ENCODE measurements at regions of chr19 and their contacts with region 1.

Region 1: GRCh38 chr19:41144403-41144802 is 30.2 kb downstream of the CYP2F1 start:
- DNase-seq: peak; percentile 77 to 90 (median 82)
- H3K4me3 ChIP-seq: no peak overlapping the region
- H3K4me3 Mint-ChIP-seq: no peak overlapping the region
- H3K27ac ChIP-seq: no peak overlapping the region
- H3K27ac Mint-ChIP-seq: peak overlapping the region in 2 of 8 donors; percentile 43 to 66
- H3K4me1 ChIP-seq: no peaks in the 10 kb centered on the region
- H3K4me1 Mint-ChIP-seq: peaks cover 0 to 3% (median 0%) of the 10 kb centered on the region in 3 donors
- H3K27me3 ChIP-seq: no peaks in the 10 kb centered on the region
- H3K27me3 Mint-ChIP-seq: peaks cover 24 to 33% of the 10 kb centered on the region in 2 donors

Region 2: DNA sequence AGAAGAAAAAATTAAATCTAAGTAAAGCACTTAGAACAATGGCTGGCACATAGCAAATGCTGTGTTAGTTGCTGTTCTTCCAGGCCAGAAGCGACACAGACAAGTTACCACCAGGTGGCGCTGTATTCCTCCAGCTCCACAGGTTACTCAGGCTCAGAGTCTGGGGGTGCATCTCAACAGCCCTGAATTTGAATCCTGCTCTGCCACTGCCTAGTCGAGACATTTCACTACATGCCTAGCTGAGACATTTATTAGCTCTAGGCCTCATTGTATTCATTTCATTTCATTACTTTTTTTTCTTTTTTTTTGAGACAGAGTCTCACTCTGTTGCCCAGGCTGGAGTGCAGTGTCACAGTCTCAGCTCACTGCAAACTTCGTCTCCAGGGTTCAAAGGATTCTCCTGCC is 169.8 kb before region 1 on chr19:
- CTCF ChIA-PET with region 1: interaction called, 10 read pairs
- POLR2A ChIA-PET with region 1: no interaction called
- DNase-seq: peak; percentile 66 to 81 (median 70)
- H3K4me3 ChIP-seq: no peak overlapping the region
- H3K4me3 Mint-ChIP-seq: no peak overlapping the region
- H3K27ac ChIP-seq: no peak overlapping the region
- H3K27ac Mint-ChIP-seq: no peak overlapping the region
- H3K4me1 ChIP-seq: peaks cover 20% of the 10 kb centered on the region
- H3K4me1 Mint-ChIP-seq: peaks cover 21 to 32% (median 26%) of the 10 kb centered on the region in 3 donors
- H3K27me3 ChIP-seq: no peaks in the 10 kb centered on the region
- H3K27me3 Mint-ChIP-seq: peaks cover 7 to 8% of the 10 kb centered on the region in 2 donors

Region 3: DNA sequence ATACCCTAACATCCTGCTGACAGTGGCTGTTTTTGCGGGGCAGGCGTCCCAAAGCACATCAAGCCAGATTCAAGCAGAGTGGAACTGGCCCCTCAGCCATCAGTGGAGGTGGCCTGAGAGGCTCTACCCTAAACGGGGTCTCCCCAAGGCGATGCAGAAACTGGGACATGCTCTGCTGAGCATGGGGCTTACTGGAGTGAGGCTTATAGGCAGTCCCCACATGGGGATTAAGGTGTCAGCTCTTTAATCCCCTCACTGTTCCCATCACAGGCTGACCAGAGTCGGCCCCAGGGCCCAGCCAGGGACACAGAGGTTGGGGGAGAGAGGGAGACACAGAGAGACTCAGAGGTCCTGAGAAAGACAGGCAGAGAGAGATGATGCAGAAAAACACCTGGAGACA is 13.2 kb before region 1 on chr19:
- CTCF ChIA-PET with region 1: interaction called, 11 read pairs
- POLR2A ChIA-PET with region 1: no interaction called
- DNase-seq: no peak
- H3K4me3 ChIP-seq: no peak overlapping the region
- H3K4me3 Mint-ChIP-seq: no peak overlapping the region
- H3K27ac ChIP-seq: no peak overlapping the region
- H3K27ac Mint-ChIP-seq: peak overlapping the region in 4 of 8 donors; percentile 67 to 94 (median 80)
- H3K4me1 ChIP-seq: peaks cover 12% of the 10 kb centered on the region
- H3K4me1 Mint-ChIP-seq: peaks cover 28 to 37% (median 36%) of the 10 kb centered on the region in 3 donors
- H3K27me3 ChIP-seq: no peaks in the 10 kb centered on the region
- H3K27me3 Mint-ChIP-seq: no peaks in the 10 kb centered on the region

Region 4: DNA sequence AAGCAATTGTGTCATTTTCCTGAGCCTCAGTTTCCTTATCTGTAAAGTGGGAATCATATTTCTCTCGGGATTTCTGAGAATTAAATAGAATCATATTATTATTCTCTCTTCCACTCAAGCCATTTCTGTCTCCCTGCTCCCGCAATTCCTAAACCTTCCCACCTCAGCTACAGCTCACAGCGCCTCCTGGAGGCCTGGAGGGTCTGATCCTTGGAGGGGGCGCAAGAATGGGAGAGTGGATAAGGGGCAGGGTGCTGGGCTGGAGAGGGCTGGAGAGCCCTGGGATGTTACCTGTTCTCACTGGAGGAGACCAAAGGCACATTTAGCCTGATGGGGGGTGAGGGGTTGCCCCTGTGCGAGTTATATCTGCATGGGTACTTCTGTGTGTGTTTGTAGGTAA is 17.5 kb after region 1 on chr19:
- CTCF ChIA-PET with region 1: no interaction called
- POLR2A ChIA-PET with region 1: no interaction called
- DNase-seq: no peak
- H3K4me3 ChIP-seq: no peak overlapping the region
- H3K4me3 Mint-ChIP-seq: no peak overlapping the region
- H3K27ac ChIP-seq: no peak overlapping the region
- H3K27ac Mint-ChIP-seq: no peak overlapping the region
- H3K4me1 ChIP-seq: no peaks in the 10 kb centered on the region
- H3K4me1 Mint-ChIP-seq: no peaks in the 10 kb centered on the region
- H3K27me3 ChIP-seq: no peaks in the 10 kb centered on the region
- H3K27me3 Mint-ChIP-seq: no peaks in the 10 kb centered on the region

Measured in CD8-positive, alpha-beta memory T cell (primary cell).